T-cell (primary cell): ENCODE measurements at regions of chr12 and their contacts with region 1.

Region 1: DNA sequence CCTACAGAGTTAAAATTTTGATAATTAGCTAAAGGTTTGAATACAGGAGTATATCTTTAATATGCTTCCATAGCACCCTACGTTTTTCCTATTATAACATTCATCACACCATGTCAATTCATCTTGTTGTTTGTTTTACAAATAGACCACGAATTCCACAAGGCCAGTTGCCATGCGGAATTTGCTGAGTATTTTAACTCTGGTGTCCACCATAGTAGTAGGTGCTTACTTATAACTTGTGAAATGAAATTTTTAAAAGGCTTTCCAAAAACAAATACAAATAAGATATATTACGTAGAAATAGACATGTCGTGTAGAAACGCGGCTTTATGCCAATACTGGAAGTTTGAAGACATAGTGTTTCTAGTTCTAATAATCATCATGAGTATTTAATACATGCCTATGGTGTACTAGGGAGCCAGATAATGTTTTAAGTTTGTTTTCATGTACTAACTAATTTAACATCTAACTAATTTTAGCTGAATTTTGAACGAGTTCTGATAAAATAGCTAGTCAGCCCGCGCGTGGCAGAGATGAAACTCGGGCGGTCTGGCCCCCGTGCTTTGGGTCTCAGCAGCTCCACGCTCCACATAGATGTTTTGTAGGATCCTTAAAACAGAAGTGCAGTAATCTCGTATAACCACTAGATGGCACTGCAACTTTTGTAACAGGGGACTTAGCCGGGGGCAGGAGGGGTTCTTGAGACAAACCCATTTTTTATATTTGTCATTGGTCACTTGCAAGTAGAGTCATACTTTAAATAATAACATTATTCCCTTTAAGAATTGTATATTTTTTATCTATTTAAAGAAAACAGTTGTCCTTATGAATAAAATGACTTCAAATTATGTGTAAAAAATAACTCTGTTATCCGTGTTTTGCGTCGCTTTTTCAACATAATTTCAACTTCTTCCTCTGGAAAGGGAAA is 10.2 kb downstream of the CD69 start:
- DNase-seq: peak in 23 of 35 experiments; percentile 15 to 85 (median 40)
- ATAC-seq: peak; percentile 46 to 75 (median 72)
- H3K4me3 ChIP-seq: peak overlapping the region in 1 of 2 donors; percentile 32
- H3K4me3 Mint-ChIP-seq: peak overlapping the region in 2 of 3 donors; percentile 28 to 39
- H3K27ac ChIP-seq: no peak overlapping the region
- H3K27ac Mint-ChIP-seq: peak overlapping the region in 1 of 2 donors; percentile 46
- H3K4me1 ChIP-seq: peaks cover 9 to 26% of the 10 kb centered on the region in 2 experiments
- H3K4me1 Mint-ChIP-seq: peaks cover 43 to 54% (median 46%) of the 10 kb centered on the region in 3 donors
- H3K27me3 ChIP-seq: no peaks in the 10 kb centered on the region
- H3K27me3 Mint-ChIP-seq: no peaks in the 10 kb centered on the region

Region 2: GRCh38 chr12:9760699-9761418 is 10.3 kb after region 1 on chr12 and contains the start of gene CD69:
- CTCF ChIA-PET with region 1: interaction called, 25 to 101 read pairs
- POLR2A ChIA-PET with region 1: interaction called, 12 to 112 read pairs
- DNase-seq: peak in 34 of 35 experiments; percentile 52 to 94 (median 85)
- ATAC-seq: peak; percentile 56 to 63 (median 62)
- H3K4me3 ChIP-seq: peak within 1 kb of the TSS; percentile 63 to 95
- H3K4me3 Mint-ChIP-seq: peak within 1 kb of the TSS; percentile 87 to 97 (median 93)
- H3K27ac ChIP-seq: peak within 1 kb of the TSS; percentile 98
- H3K27ac Mint-ChIP-seq: peak within 1 kb of the TSS; percentile 97 to 99
- H3K4me1 ChIP-seq: peaks cover 32 to 50% of the 10 kb centered on the region in 2 experiments
- H3K4me1 Mint-ChIP-seq: peaks cover 55 to 69% (median 62%) of the 10 kb centered on the region in 3 donors
- H3K27me3 ChIP-seq: no peaks in the 10 kb centered on the region
- H3K27me3 Mint-ChIP-seq: no peaks in the 10 kb centered on the region
- total RNA-seq, gene CD69: 36.7 to 746 (median 39.4) TPM

Region 3: DNA sequence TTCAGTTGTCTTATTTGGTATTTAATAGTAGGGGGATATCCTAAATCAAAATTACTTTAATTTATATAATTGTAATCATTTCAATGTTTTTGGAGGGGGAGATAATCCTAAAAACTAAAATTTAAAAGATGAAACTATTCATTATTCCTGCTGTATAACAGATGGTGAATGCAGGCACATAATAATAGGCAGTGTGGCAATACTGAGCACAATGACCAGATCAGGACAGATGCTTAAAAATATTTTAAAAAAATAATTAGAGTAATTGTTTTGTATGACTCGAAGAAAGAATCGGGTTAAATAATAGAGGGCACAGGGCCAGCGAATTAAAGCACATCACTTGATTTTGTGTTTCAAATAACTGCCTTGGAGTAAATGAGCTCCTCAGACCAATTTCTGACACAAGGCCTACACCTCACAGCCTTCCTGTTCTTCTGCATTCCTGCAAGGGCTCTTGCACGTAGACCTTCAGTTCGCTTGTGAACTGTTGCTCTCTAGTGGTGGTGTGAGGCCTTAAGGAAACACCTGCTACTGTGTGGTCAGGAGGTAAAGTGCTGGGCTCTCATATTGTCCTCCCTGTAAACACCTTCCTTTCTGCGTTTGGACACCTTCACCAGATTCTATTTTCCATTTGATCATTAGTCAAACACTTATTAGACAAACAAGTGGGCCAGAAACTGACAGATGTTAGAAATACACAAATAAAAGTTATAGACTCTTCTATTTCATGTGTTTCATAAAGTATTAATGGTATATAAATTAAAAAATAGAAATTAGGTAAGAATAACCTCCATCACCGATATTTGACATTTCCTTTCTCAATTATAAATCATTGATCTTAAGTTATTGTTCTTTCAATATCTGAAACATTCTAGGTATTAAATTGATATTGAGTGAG is 47.4 kb after region 1 on chr12:
- CTCF ChIA-PET with region 1: interaction called, 127 to 311 read pairs
- POLR2A ChIA-PET with region 1: interaction called, 15 to 80 read pairs
- DNase-seq: peak; percentile 29 to 87 (median 59)
- ATAC-seq: peak; percentile 92 to 98 (median 94)
- H3K4me3 ChIP-seq: no peak overlapping the region
- H3K4me3 Mint-ChIP-seq: peak overlapping the region in 1 of 3 donors; percentile 40
- H3K27ac ChIP-seq: peak overlapping the region; percentile 54
- H3K27ac Mint-ChIP-seq: peak overlapping the region; percentile 24 to 75
- H3K4me1 ChIP-seq: peaks cover 10 to 42% of the 10 kb centered on the region in 2 experiments
- H3K4me1 Mint-ChIP-seq: peaks cover 47 to 51% (median 49%) of the 10 kb centered on the region in 3 donors
- H3K27me3 ChIP-seq: no peaks in the 10 kb centered on the region
- H3K27me3 Mint-ChIP-seq: no peaks in the 10 kb centered on the region

Region 4: GRCh38 chr12:9813821-9814809 is 63.6 kb after region 1 on chr12:
- CTCF ChIA-PET with region 1: interaction called, 31 to 33 read pairs
- POLR2A ChIA-PET with region 1: interaction called, 5 to 10 read pairs
- DNase-seq: peak; percentile 82 to 95 (median 91)
- ATAC-seq: peak; percentile 96 to 98 (median 98)
- H3K4me3 ChIP-seq: peak overlapping the region; percentile 63 to 83
- H3K4me3 Mint-ChIP-seq: peak overlapping the region; percentile 82 to 90 (median 83)
- H3K27ac ChIP-seq: peak overlapping the region; percentile 61
- H3K27ac Mint-ChIP-seq: peak overlapping the region; percentile 74 to 85
- H3K4me1 ChIP-seq: peaks cover 8 to 15% of the 10 kb centered on the region in 2 experiments
- H3K4me1 Mint-ChIP-seq: peaks cover 10 to 15% (median 10%) of the 10 kb centered on the region in 3 donors
- H3K27me3 ChIP-seq: peaks cover 0 to 9% of the 10 kb centered on the region in 2 experiments
- H3K27me3 Mint-ChIP-seq: peaks cover 3 to 12% of the 10 kb centered on the region in 2 donors

Region 5: DNA sequence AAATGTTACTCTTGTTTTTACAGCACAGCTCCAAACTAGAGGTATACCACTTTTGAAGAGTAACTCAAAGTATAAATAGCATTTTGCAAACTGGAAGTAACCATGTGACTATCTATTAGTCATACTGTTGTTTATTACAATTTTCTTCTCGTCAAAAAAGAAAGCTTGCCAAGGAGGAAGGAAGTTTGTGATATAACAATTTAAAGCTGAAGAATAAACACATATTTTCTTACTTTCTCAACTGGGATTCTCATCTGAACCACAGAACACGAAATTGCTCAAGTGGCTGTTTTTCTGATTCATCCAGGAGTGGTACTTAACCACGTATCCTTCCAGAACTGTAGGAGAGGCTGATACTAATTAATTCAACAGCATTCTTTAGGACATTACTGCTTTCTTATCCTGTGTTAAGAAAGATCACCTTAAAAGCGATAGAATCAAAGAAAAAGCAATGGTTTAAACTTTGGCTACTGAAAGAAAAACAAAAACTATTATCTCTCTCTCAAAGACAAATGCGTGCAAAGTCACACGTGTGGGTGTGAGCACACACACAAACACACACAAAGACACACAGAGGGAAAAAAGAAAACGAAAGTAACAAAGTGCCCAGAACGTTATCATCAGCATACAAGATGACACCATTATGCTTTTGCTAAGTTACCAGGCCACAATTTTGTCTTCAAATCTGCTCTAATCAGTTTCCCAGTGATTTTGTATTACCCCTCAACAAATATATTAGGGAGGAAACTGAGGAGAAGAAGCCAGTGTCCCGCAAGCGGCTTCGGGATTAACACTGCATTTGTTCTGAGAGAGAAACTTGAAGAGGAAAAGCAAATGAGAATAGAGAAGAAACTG is 119.0 kb after region 1 on chr12 and contains the start of gene CLEC2B:
- CTCF ChIA-PET with region 1: interaction called in 1 of 2 experiments, 24 read pairs
- POLR2A ChIA-PET with region 1: interaction called, 3 to 4 read pairs
- DNase-seq: peak in 12 of 35 experiments; percentile 11 to 75 (median 20)
- ATAC-seq: peak; percentile 71 to 72 (median 72)
- H3K4me3 ChIP-seq: peak within 1 kb of the TSS; percentile 56 to 59
- H3K4me3 Mint-ChIP-seq: peak within 1 kb of the TSS; percentile 89 to 96 (median 93)
- H3K27ac ChIP-seq: peak within 1 kb of the TSS; percentile 96
- H3K27ac Mint-ChIP-seq: peak within 1 kb of the TSS; percentile 99
- H3K4me1 ChIP-seq: peaks cover 7 to 17% of the 10 kb centered on the region in 2 experiments
- H3K4me1 Mint-ChIP-seq: peaks cover 25 to 48% (median 30%) of the 10 kb centered on the region in 3 donors
- H3K27me3 ChIP-seq: no peaks in the 10 kb centered on the region
- H3K27me3 Mint-ChIP-seq: no peaks in the 10 kb centered on the region
- total RNA-seq, gene CLEC2B: 60.0 to 101 (median 74.7) TPM